ENCODE measurements at regions of chr14 and their contacts with region 1.

Region 1: DNA sequence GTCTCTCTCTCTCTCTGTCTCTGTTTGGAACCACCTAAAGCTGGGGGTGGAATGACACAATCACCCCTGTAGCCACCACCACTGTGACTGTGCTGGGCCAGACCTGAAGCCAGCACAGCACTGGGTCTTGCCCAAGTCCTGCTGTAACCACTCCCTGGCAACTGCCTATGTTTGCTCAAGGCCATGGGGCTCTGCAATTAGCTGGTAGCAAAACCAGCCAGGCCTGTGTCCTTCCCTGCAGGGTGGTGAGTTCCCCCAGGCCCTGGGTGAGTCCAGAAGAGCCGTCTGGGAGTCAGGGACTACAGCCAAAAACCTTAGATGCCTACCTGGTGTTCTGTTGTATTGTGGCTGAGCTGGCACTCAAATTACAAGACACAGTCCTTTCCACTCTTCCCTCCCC is 50.8 kb downstream of the DGLUCY start:
- DNase-seq: no peak
- ATAC-seq: no peak
- H3K4me3 ChIP-seq: no peak overlapping the region
- H3K4me3 Mint-ChIP-seq: no peak overlapping the region
- H3K27ac ChIP-seq: no peak overlapping the region
- H3K27ac Mint-ChIP-seq: no peak overlapping the region
- H3K4me1 ChIP-seq: no peaks in the 10 kb centered on the region
- H3K4me1 Mint-ChIP-seq: no peaks in the 10 kb centered on the region
- H3K27me3 ChIP-seq: no peaks in the 10 kb centered on the region
- H3K27me3 Mint-ChIP-seq: no peaks in the 10 kb centered on the region
- CTCF ChIP-seq: no peak

Region 2: DNA sequence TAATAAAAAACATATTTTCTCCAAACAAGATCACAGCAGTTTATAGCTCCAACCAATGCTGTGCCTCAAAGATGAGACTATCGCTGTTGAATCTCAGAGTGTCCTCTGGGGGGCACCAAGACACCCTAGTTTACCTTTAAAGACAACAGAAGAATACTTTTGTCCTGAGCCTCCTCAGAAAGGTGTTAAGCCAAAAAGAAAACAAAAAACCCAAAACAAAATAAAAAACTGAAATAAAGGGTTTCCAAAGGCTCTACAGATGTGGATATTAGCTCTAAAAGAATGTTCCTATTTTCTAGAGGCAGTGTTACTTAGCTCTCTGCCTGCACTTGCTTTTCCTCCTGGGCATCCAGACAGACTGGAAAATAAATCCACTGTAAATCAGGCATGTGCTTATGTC is 261.6 kb before region 1 on chr14:
- CTCF ChIA-PET with region 1: interaction called, 347 read pairs
- POLR2A ChIA-PET with region 1: no interaction called
- intact Hi-C with region 1: no loop called
- DNase-seq: peak; percentile 68
- ATAC-seq: peak; percentile 69
- H3K4me3 ChIP-seq: no peak overlapping the region
- H3K4me3 Mint-ChIP-seq: no peak overlapping the region
- H3K27ac ChIP-seq: no peak overlapping the region
- H3K27ac Mint-ChIP-seq: peak overlapping the region; percentile 46
- H3K4me1 ChIP-seq: peaks cover 5 to 8% of the 10 kb centered on the region in 2 donors
- H3K4me1 Mint-ChIP-seq: peaks cover 15% of the 10 kb centered on the region
- H3K27me3 ChIP-seq: no peaks in the 10 kb centered on the region
- H3K27me3 Mint-ChIP-seq: no peaks in the 10 kb centered on the region
- CTCF ChIP-seq: peak; percentile 87

Region 3: DNA sequence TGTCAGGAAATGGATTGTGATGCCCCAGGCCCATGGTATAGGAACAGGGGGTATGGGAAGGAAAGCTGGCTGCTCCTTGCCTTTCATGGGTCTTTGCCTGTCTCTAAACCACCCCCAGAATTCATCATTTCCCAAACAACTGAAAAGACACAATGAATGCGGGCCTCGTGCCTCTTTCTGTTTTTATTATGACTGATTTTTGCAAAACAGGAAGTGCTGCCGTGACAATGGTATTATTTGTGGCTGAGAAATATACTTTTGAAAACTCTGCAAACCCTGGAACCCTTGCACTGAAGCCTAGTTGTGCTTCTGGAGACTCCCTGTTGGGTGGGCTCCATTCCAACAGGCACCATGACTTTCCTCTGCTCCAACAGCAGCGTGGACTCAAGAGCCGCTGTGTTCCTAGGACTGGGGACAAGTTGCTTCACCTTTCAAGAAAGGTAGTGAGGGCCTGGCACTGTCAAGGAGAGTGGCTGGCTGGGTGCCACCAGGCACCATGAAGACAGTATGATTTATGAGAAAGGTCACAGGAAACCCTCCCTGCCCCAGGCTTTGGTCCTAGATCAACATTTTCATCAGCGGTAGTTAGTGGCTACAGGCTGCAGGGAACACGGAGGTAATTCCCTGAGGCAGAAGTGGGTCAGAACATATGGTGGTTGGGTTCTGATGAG is 55.6 kb before region 1 on chr14:
- CTCF ChIA-PET with region 1: no interaction called
- POLR2A ChIA-PET with region 1: no interaction called
- intact Hi-C with region 1: no loop called
- DNase-seq: peak; percentile 21
- ATAC-seq: no peak
- H3K4me3 ChIP-seq: no peak overlapping the region
- H3K4me3 Mint-ChIP-seq: no peak overlapping the region
- H3K27ac ChIP-seq: peak overlapping the region in 1 of 2 donors; percentile 44
- H3K27ac Mint-ChIP-seq: peak overlapping the region; percentile 76
- H3K4me1 ChIP-seq: peaks cover 24 to 27% of the 10 kb centered on the region in 2 donors
- H3K4me1 Mint-ChIP-seq: peaks cover 39% of the 10 kb centered on the region
- H3K27me3 ChIP-seq: no peaks in the 10 kb centered on the region
- H3K27me3 Mint-ChIP-seq: no peaks in the 10 kb centered on the region
- CTCF ChIP-seq: no peak

Measured in B cell (primary cell).